Mammary epithelial cell (primary cell): ENCODE measurements at regions of chr17 and their contacts with region 1.

Region 1: GRCh38 chr17:17526369-17526768 is 30.2 kb upstream of the RASD1 start:
- DNase-seq: no peak
- H3K4me3 ChIP-seq: no peak overlapping the region
- H3K27ac ChIP-seq: no peak overlapping the region
- H3K4me1 ChIP-seq: no peaks in the 10 kb centered on the region
- H3K27me3 ChIP-seq: peaks cover 2% of the 10 kb centered on the region
- CTCF ChIP-seq: no peak

Region 2: DNA sequence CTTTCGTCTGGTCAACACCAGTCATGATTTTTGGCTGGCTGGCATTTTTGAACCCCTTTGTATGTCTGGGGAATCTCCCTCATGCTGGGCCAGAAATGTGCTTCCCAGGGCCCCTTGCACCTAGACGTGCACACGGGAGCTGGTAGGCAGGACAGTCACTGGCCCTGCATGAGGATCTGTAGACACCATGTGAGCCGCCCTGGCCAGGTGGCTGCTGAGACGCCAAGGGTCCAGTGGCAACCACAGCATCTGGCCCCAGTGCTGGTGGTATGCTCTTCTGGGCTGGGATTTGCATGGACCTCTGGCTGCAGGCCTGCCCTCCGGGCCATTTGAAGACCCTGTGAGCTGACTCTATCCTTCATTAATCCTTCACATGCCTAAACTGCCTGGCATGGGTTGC is 155.7 kb before region 1 on chr17:
- CTCF ChIA-PET with region 1: no interaction called
- dilution Hi-C with region 1: loop called (anchors 5 kb)
- in situ Hi-C with region 1: no loop called
- intact Hi-C with region 1: no loop called
- DNase-seq: no peak
- H3K4me3 ChIP-seq: no peak overlapping the region
- H3K27ac ChIP-seq: no peak overlapping the region
- H3K4me1 ChIP-seq: no peaks in the 10 kb centered on the region
- H3K27me3 ChIP-seq: no peaks in the 10 kb centered on the region
- CTCF ChIP-seq: no peak

Region 3: GRCh38 chr17:17561408-17562145 is 35.2 kb after region 1 on chr17:
- CTCF ChIA-PET with region 1: no interaction called
- dilution Hi-C with region 1: loop called (anchors 5 kb)
- in situ Hi-C with region 1: no loop called
- intact Hi-C with region 1: no loop called
- DNase-seq: no peak
- H3K4me3 ChIP-seq: no peak overlapping the region
- H3K27ac ChIP-seq: no peak overlapping the region
- H3K4me1 ChIP-seq: no peaks in the 10 kb centered on the region
- H3K27me3 ChIP-seq: no peaks in the 10 kb centered on the region
- CTCF ChIP-seq: no peak

Region 4: GRCh38 chr17:17575360-17576251 is 49.2 kb after region 1 on chr17:
- CTCF ChIA-PET with region 1: no interaction called
- dilution Hi-C with region 1: no loop called
- in situ Hi-C with region 1: no loop called
- intact Hi-C with region 1: no loop called
- DNase-seq: peak; percentile 24
- H3K4me3 ChIP-seq: no peak overlapping the region
- H3K27ac ChIP-seq: no peak overlapping the region
- H3K4me1 ChIP-seq: peaks cover 14% of the 10 kb centered on the region
- H3K27me3 ChIP-seq: no peaks in the 10 kb centered on the region
- CTCF ChIP-seq: no peak